ENCODE measurements at regions of chr14 and their contacts with region 1.

Region 1: DNA sequence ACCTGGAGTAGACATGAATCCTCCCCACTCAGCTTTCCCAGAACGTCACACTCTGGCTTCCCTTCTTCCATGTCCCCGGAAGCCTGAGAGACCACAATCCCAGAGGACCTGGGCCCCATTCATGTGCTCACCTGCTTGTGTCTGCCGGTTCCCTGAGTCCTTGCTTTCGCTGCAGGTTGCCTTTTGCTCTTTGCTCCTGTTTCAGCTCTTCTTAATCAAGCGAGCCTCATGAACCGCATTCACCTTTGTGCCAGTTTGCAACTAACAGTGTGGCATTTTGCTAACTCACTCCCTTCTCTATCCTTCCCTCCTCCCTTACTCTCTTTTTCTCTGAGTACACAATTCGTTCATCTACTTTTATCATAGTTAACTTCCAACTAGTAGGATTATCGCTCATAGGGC is 23.1 kb downstream of the ENTPD5 start:
- DNase-seq: no peak
- ATAC-seq: no peak
- H3K4me3 ChIP-seq: no peak overlapping the region
- H3K27ac ChIP-seq: no peak overlapping the region
- H3K4me1 ChIP-seq: no peaks in the 10 kb centered on the region
- H3K27me3 ChIP-seq: no peaks in the 10 kb centered on the region
- CTCF ChIP-seq: no peak

Region 2: GRCh38 chr14:73888971-73889370 is 107.0 kb before region 1 on chr14:
- CTCF ChIA-PET with region 1: interaction called, 12 read pairs
- POLR2A ChIA-PET with region 1: no interaction called
- in situ Hi-C with region 1: no loop called
- intact Hi-C with region 1: no loop called
- DNase-seq: no peak
- ATAC-seq: no peak
- H3K4me3 ChIP-seq: peak overlapping the region in 1 of 2 experiments; percentile 86; a peak in 3 of 4 replicates
- H3K27ac ChIP-seq: peak overlapping the region; percentile 95
- H3K4me1 ChIP-seq: peaks cover 13% of the 10 kb centered on the region; the same call in 1 of the 2 replicates
- H3K27me3 ChIP-seq: no peaks in the 10 kb centered on the region
- CTCF ChIP-seq: no peak